ENCODE measurements at regions of chr7 and their contacts with region 1.

Region 1: GRCh38 chr7:22103255-22103969 is 157.7 kb upstream of the CDCA7L start:
- DNase-seq: peak; percentile 84
- H3K4me3 Mint-ChIP-seq: peak overlapping the region; percentile 60
- H3K27ac Mint-ChIP-seq: no peak overlapping the region
- H3K4me1 Mint-ChIP-seq: no peaks in the 10 kb centered on the region
- H3K27me3 Mint-ChIP-seq: peaks cover 11% of the 10 kb centered on the region
- CTCF ChIP-seq: peak; percentile 73

Region 2: DNA sequence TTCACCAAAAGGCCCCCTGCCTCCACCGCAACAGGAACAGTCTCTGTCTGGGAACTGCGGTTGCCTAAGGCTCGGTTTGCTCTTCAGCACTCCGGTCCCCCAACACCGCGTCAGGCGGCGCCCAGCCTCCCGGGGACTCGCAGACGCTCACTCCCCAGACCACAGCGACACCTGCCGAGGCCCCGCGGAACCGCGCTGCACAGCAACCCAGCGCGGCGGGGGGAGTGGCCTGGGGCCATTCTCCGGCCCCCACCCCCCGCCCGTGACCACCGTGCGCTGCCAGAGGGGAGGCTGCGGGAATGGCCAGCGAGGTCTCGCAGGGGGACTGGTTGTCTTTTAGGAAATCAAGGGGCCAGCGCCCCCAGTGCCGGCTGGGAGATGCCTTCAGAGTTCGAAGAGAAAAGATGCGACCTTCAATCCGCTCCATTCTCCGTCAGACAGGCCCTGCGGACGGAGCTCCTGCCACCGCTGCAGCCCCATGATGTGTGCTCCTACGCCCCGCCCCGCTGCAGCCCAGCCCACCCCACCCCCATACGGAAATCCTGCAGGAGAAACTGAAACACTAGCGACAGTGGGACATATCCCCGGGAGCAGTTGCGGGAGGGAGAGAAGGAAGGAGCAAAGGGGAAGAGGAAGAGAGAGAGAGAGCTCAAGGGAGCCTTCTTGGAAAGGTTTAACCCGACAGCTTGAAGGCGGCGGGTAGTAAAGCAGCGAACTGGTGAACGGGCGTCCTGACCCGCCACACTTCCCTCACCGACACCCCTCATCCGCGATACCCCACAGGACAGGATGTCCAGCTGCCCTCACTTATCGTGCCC is 20.3 kb before region 1 on chr7:
- CTCF ChIA-PET with region 1: interaction called, 25 read pairs
- POLR2A ChIA-PET with region 1: no interaction called
- intact Hi-C with region 1: no loop called
- DNase-seq: peak; percentile 76
- H3K4me3 Mint-ChIP-seq: peak overlapping the region; percentile 73
- H3K27ac Mint-ChIP-seq: peak overlapping the region; percentile 73
- H3K4me1 Mint-ChIP-seq: no peaks in the 10 kb centered on the region
- H3K27me3 Mint-ChIP-seq: peaks cover 22% of the 10 kb centered on the region
- CTCF ChIP-seq: peak; percentile 93

Region 3: DNA sequence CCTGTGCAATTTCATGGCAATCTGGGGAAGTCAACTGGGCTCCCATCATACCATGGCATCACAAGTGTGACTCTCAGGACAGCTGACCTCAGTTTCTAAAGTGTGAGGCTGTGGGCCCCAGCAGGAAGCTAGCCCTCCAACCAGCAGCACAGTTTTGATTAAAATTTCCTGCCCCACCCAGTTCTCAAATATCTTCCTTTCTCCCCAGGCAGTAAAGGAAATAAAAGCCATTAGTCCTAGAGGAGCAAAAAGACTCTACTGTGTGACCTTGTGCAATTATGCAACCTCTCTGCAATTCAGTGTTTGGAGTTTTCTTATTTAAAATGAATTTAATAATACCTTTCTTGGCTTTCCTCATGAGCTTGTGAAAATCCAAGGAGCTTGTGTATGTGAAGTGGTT is 14.6 kb before region 1 on chr7:
- CTCF ChIA-PET with region 1: interaction called, 25 read pairs
- POLR2A ChIA-PET with region 1: no interaction called
- intact Hi-C with region 1: no loop called
- DNase-seq: no peak
- H3K4me3 Mint-ChIP-seq: no peak overlapping the region
- H3K27ac Mint-ChIP-seq: no peak overlapping the region
- H3K4me1 Mint-ChIP-seq: no peaks in the 10 kb centered on the region
- H3K27me3 Mint-ChIP-seq: no peaks in the 10 kb centered on the region
- CTCF ChIP-seq: no peak

Region 4: DNA sequence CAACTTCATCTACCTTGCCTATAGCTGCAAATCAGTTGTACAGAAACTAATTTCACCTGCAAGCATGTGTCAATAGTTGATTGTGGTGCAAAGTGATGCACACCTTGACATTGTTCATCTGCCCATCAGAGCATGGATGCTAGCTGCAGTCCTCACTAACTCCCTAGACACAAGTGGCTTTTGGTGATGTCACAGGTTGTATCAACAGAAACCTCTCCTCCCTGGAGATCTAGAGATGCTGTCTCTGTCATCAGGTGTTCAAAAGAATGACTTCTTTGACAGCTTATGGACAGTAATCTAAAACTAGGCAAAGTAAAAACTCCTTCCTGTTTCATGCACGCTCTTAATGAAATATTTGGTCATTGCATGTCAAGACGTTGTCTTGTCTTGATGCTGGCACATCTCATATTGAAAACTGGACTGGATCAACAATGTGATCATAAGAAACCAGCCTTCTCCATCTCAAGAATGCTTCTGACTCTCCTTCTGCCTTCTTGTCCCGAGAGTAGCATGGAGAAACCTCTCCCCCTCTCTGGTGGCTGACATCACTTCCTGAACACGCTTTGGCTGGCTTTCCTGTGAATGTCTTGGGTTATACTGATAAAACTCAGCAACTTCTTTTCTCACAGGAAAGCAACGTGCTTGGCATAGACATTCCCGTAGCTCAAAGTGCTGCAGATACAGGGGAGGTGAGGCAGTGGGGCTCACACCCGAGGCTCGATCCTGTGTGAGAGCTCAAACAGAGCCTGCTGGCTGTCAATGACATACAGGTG is 18.5 kb after region 1 on chr7:
- CTCF ChIA-PET with region 1: interaction called, 10 read pairs
- POLR2A ChIA-PET with region 1: no interaction called
- intact Hi-C with region 1: no loop called
- DNase-seq: no peak
- H3K4me3 Mint-ChIP-seq: no peak overlapping the region
- H3K27ac Mint-ChIP-seq: no peak overlapping the region
- H3K4me1 Mint-ChIP-seq: no peaks in the 10 kb centered on the region
- H3K27me3 Mint-ChIP-seq: no peaks in the 10 kb centered on the region
- CTCF ChIP-seq: no peak

Region 5: DNA sequence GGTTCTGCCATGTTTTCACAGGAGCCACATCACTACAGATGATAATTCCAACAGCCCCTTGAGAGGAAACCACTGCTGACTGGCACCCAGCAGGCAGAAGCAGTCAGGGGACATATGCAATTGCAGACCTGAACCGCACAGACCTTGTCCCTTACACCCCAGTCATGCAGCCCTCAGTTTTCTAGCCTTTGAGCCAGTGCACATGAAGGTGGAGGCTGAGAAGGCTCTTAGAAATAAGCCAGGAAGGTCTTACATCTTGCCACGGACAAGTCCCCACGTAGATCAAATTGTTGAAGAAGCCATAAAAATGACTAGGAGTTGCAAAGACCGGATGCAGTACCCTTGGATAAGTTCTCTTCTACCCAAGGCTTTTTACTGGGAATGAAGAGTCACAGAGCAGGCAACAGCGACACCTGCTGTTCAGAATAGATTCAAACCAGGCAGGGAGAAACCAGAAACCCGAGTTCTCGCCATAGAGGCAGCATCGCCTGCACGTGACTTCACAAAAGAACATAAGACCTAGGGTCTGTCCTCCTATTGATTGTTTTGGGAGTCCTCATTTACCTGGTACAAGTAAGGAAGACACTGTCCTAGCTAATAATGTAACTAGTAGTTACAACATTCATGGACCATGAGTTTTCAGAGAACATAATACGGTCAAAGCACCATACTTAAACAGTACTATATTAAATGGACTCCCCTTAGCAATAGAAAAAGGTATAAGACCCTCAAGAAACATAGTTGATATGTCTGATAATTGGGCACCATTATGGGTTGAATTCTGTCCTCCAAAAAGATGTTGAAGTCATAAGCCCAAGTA is 385.4 kb after region 1 on chr7:
- CTCF ChIA-PET with region 1: interaction called, 93 read pairs
- POLR2A ChIA-PET with region 1: no interaction called
- intact Hi-C with region 1: loop called (anchors 2 kb)
- DNase-seq: peak; percentile 83
- H3K4me3 Mint-ChIP-seq: no peak overlapping the region
- H3K27ac Mint-ChIP-seq: no peak overlapping the region
- H3K4me1 Mint-ChIP-seq: peaks cover 6% of the 10 kb centered on the region
- H3K27me3 Mint-ChIP-seq: no peaks in the 10 kb centered on the region
- CTCF ChIP-seq: peak; percentile 93

Measured in MCF 10A (cell line).